ENCODE measurements at regions of chr1 and their contacts with region 1.

Region 1: DNA sequence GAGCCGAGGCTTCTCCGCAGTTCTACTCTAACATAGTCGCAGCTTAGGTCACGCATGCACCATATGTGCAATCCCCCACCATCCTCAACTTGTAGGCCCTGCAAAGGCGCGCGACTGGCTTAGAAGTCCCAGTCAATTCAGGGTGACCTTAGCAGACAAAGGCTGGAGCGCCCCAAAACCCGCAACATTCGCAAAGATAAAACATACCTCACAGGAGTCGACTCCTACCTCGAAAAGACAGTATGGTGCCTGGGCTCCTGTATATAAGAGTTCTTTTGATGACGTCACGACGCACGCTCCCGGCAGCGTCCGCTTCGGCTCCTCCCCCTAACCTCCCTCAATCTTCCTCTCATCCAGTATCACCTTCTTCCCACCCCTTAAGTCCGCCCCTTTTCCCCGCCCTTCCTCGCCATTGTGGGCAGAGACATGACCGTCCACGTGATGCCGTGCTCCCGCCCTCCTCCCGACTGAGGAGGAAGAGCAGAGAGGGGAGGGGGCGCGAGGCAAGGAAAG is at the start of gene GAS5:
- DNase-seq: peak; percentile 99 to 100
- H3K4me3 ChIP-seq: peak within 1 kb of the TSS; percentile 61 to 77 (median 68)
- H3K27ac ChIP-seq: peak within 1 kb of the TSS; percentile 93 to 98 (median 95)
- H3K4me1 ChIP-seq: peaks cover 20 to 75% (median 47%) of the 10 kb centered on the region in 4 donors
- H3K27me3 ChIP-seq: no peaks in the 10 kb centered on the region
- CTCF ChIP-seq: no peak
- EP300 ChIP-seq: peak; percentile 15
- POLR2A ChIP-seq: peak in 2 of 4 donors; percentile 93 to 98
- total RNA-seq, gene GAS5: 256 to 453 (median 353) TPM

Region 2: DNA sequence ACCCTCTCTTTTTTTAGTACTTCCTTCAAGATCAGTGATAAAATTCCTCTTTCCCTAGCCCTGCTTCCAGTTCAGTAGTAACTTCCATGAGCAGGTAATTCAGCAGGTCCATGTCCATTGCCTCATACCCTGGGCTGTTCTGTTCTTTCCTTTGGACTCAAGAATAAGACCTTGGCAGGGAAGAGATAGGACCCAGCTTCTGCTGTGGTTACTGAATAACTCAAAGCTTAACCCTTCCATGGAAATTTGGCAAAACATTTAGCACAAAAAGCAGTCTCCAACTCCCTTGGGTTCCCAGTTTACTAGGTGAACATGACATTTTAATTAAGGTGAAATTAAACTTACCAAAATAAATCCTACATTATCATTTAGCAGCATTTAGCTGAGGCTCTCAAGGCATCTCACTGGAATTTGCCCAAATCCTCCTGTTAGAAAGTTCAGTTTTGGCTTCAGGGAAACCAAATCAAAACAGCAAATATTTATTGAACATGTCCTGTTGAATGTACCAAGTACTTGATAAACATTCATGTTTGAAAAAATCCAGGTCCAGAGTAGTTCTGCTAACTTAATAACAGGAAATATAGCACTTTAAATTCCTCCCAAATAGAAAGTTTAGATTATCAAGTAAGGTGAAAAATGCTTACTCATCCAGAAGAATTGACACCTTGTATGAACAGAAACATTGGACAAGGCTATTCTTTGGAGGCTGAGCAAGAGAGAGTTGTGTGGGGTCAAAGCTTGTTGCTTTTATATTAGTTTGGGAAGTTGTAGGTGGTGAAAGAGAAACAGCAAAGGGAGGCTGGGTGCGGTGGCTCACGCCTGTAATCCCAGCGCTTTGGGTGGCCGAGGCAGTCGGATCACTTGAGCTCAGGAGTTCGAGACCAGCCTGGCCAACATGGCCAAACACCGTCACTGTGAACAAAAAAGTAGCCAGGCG is 57.8 kb after region 1 on chr1:
- intact Hi-C with region 1: loop called (anchors 10 kb)
- DNase-seq: no peak
- H3K4me3 ChIP-seq: no peak overlapping the region
- H3K27ac ChIP-seq: peak overlapping the region; percentile 22 to 72 (median 54)
- H3K4me1 ChIP-seq: peaks cover 0 to 16% (median 9%) of the 10 kb centered on the region in 4 donors
- H3K27me3 ChIP-seq: no peaks in the 10 kb centered on the region
- CTCF ChIP-seq: no peak
- EP300 ChIP-seq: no peak
- POLR2A ChIP-seq: no peak

Region 3: DNA sequence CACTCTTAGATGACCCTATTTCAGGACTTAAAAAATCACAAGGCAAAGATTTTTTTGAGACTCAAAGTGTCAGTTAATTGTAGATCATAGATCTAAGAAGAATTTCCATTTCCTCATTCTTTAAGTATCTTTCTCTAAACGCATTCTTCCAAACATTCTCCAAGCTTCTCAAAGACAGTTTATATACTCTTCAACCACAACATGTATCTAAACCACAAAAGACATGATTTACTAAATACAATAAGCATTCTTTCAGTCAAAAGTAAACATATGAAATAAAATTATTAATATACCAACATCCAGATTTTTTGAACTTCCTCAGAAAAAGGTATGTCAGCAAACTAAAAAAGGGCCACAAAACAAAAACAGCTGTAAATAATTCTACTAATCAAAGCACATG is 130.0 kb after region 1 on chr1:
- intact Hi-C with region 1: no loop called
- DNase-seq: no peak
- H3K4me3 ChIP-seq: no peak overlapping the region
- H3K27ac ChIP-seq: no peak overlapping the region
- H3K4me1 ChIP-seq: peaks cover 0 to 63% (median 34%) of the 10 kb centered on the region in 4 donors
- H3K27me3 ChIP-seq: no peaks in the 10 kb centered on the region
- CTCF ChIP-seq: no peak
- EP300 ChIP-seq: no peak
- POLR2A ChIP-seq: no peak